ENCODE measurements at regions of chr2 and their contacts with region 1.

Region 1: DNA sequence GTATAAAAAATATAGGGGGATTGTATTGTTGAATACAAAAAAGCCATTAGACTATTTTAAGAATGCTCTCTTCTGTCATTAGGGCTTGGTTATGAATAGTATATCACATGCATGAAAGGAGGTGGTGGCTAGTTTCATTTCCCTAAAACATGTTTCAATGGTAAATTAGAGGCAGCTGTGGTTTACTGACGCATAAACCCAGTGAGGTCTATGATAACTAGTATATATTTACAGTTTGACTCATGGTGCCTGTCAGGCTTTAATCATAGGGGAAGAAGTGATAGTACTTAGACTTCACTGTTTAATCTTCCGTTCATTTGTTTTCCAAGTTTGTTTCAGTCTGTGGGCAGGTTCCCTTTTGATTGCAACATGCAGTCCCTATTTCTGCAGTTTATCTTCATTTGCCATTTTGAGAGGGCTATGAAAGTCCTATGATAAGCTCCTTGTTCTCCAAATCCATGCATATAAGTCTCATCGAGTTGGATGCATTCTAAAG is 55.1 kb upstream of the MAP4K3 start:
- DNase-seq: peak; percentile 23
- H3K4me3 Mint-ChIP-seq: peak overlapping the region; percentile 55
- H3K27ac Mint-ChIP-seq: peak overlapping the region; percentile 76
- H3K4me1 Mint-ChIP-seq: peaks cover 52% of the 10 kb centered on the region
- H3K27me3 Mint-ChIP-seq: peaks cover 13% of the 10 kb centered on the region

Region 2: DNA sequence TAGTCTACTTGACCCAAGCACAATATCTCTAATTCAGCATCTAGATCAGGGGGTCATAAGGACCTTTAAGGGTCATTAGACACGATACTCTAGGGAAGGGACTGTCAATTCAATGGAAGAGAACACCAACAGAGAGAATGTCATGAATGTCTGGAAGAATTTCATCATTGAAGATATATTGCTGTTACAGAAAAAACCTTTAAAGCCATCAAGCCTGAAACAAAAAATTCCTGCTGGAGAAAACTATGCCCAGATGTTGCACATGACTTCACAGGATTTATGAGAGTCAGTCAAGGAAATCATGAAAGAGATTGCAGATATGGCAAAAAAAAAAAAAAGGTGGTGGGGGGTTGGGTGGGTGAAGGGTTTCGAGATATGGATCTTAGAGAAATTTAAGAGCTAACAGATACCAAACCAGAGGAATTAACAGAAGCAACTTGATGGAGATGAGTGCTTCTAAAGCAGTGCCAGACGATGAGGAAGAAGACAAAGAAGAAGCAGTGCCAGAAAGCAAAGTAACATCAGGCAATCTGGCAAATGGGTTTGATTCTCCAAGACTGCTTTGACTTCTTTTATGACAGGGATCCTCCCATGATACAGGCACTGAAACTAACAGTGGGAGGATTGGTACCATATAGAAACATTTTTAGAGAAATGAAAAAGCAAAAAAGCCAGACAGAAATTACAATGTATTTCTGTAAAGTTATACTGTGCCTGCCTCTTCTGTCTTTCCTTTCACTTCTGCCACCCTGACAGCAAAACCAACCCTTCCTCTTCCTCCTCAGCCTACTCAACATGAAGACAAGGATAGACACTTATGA is 83.6 kb before region 1 on chr2:
- intact Hi-C with region 1: loop called (anchors 1 kb)
- DNase-seq: no peak
- H3K4me3 Mint-ChIP-seq: no peak overlapping the region
- H3K27ac Mint-ChIP-seq: peak overlapping the region; percentile 54
- H3K4me1 Mint-ChIP-seq: peaks cover 39% of the 10 kb centered on the region
- H3K27me3 Mint-ChIP-seq: no peaks in the 10 kb centered on the region

Region 3: GRCh38 chr2:39436592-39437510 is 55.3 kb before region 1 on chr2 and contains the start of gene MAP4K3:
- intact Hi-C with region 1: loop called (anchors 1 kb)
- DNase-seq: peak; percentile 65
- H3K4me3 Mint-ChIP-seq: peak within 1 kb of the TSS; percentile 96
- H3K27ac Mint-ChIP-seq: peak within 1 kb of the TSS; percentile 86
- H3K4me1 Mint-ChIP-seq: peaks cover 51% of the 10 kb centered on the region
- H3K27me3 Mint-ChIP-seq: no peaks in the 10 kb centered on the region
- total RNA-seq, gene MAP4K3: 15.7 and 24.1 TPM in 2 replicates

Region 4: DNA sequence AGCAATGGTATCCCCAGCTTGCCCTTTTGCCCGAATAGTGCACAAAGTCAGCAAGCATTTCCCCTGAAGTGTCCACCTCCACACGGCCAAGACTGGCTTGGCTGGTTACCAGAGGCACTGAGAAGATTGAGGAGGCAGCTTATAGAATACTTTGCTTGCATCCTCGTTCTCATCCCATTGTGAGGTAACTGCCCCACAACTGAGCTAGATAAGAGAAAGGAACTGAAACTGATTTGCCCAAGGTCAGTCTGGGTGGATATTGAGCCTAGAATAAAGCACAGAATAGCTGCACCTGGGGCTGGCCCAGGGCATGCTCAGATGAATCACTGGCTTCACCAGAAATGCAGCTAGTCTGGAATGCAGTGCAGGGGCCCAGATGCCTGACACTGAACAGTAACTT is 22.3 kb before region 1 on chr2:
- intact Hi-C with region 1: loop called (anchors 1 kb)
- DNase-seq: no peak
- H3K4me3 Mint-ChIP-seq: no peak overlapping the region
- H3K27ac Mint-ChIP-seq: no peak overlapping the region
- H3K4me1 Mint-ChIP-seq: peaks cover 12% of the 10 kb centered on the region
- H3K27me3 Mint-ChIP-seq: peaks cover 6% of the 10 kb centered on the region

Region 5: DNA sequence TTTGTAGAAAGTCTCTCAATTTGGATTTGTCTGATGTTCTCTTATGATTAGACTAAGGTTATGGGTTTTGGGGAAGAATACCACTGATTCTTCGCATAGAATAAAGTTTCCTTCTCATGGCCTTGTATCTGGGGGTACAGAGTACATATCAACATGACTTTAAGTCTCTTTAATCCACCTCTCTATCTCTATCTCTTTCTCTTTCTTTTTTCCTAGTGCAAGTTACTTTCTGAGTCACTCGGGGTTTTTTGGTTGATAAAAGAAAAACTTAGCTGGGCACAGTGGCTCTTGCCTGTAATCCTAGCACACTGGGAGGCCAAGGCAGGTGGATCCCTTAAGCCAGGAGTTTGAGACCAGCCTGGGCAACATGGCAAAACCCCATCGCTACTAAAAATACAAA is 45.0 kb after region 1 on chr2:
- intact Hi-C with region 1: loop called (anchors 1 kb)
- DNase-seq: no peak
- H3K4me3 Mint-ChIP-seq: no peak overlapping the region
- H3K27ac Mint-ChIP-seq: no peak overlapping the region
- H3K4me1 Mint-ChIP-seq: peaks cover 12% of the 10 kb centered on the region
- H3K27me3 Mint-ChIP-seq: peaks cover 4% of the 10 kb centered on the region

Region 6: GRCh38 chr2:39603436-39603835 is 111.3 kb after region 1 on chr2:
- intact Hi-C with region 1: loop called (anchors 5 kb)
- DNase-seq: no peak
- H3K4me3 Mint-ChIP-seq: no peak overlapping the region
- H3K27ac Mint-ChIP-seq: no peak overlapping the region
- H3K4me1 Mint-ChIP-seq: no peaks in the 10 kb centered on the region
- H3K27me3 Mint-ChIP-seq: peaks cover 2% of the 10 kb centered on the region

Region 7: DNA sequence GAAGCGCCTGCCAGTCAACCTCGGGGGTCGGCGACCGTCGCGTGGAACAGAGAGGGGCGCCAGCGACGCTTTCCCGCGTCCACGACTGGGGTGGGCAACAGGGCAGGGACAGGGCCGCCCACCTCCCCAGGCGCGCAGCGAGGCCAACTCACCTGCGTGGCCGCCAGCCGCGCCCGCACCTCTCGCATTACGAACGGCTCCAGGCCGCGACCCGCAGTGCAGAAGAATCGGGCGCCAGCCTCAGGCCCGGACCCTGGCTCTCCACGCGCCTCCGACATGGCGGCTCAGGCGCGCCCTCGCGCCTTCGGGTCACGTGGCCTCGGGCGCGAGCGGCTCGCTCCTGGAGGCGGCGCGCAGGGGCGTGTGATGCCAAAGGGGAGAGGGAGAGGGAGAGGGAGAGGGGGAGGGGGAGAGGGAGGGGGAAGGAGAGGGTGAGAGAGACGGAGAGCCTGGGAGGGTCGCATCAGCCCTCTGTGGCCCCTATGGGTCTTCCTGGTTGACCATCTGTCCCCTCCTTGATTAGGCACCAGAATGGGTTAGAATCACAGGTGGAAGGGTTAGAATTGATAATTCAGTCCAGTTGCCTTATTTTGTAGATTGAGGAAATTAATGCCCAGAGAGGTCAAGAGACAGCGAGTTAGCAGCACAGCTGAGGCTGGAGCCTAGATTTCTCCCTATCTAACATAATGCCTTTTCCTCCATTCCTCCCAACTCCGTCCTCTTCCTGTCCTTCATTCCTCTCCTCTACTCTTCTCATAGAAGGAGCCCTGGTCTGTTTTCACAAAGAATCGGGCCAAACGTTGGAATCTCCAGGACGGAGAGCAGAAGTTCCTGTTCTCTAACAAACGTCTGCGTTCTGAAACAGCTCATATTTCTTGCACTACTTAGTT is 287.1 kb after region 1 on chr2 and contains the start of gene THUMPD2:
- intact Hi-C with region 1: loop called (anchors 5 kb)
- DNase-seq: peak; percentile 67
- H3K4me3 Mint-ChIP-seq: peak within 1 kb of the TSS; percentile 94
- H3K27ac Mint-ChIP-seq: peak within 1 kb of the TSS; percentile 95
- H3K4me1 Mint-ChIP-seq: peaks cover 49% of the 10 kb centered on the region
- H3K27me3 Mint-ChIP-seq: peaks cover 5% of the 10 kb centered on the region
- total RNA-seq, gene THUMPD2: 21.2 and 21.6 TPM in 2 replicates

Measured in activated T-helper 1 cell treated with anti-CD3 and anti-CD28 coated beads, Interleukin-12 subunit alpha, Interleukin-12 subunit beta, Interleukin-2, Interleukin-4 antibody, amounts not matched to agents 30 ng/mL and 10 ng/mL and 1 ng/mL, durations not matched to agents 14 hours and 24 hours and 36 hours (primary cell).